ENCODE measurements at regions of chr14 and their contacts with region 1.

Region 1: GRCh38 chr14:72523424-72524294 is 370.2 kb downstream of the DPF3 start:
- DNase-seq: no peak
- CTCF ChIP-seq: no peak

Region 2: DNA sequence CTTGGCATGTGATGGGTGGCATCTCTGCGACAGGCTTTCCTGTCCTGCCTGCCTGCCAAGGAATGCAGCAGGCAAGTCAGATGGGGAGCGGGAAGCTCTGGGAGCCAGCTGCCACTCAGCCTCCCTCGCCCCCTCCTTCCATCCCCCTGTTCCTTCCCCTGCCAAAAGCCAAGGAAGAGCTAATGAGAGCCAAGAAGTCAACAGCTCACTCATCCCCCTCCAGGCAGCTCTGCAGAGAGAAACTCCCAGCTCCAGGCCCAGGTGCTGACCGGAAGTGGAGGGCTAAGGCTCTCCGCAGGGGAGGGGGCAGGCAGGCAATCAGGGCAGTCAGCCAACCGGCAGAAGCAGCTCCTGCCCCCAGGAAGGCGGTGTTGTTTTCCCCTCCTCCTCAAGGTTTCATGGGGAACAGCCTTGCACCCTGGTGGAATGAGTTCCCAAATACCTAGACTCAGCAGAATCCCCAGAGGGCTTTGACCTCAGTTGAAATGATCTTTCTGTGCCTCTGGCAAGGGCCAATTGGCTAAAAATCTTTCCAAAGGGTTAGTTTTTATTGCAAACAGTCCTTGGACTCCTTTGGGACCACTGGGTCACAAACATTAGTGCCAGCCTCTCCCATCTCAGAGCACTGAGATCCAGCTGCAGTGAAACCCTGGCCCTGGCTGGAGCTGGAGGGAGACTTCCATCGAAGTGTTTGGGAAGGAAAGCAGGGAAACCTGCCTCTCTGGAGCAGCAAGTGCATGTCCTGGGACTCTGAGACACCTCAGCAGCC is 21.1 kb after region 1 on chr14:
- CTCF ChIA-PET with region 1: interaction called, 12 read pairs
- POLR2A ChIA-PET with region 1: no interaction called
- DNase-seq: no peak
- CTCF ChIP-seq: no peak